Posterior vena cava (tissue), 2 donors: ENCODE measurements at regions of chr12 and their contacts with region 1.

Region 1: GRCh38 chr12:93322784-93323183 is 54.9 kb upstream of the NUDT4 start:
- DNase-seq: no peak

Region 2: GRCh38 chr12:93279565-93280412 is 43.0 kb before region 1 on chr12:
- intact Hi-C with region 1: loop called in 1 of 2 experiments (anchors 1 kb)
- DNase-seq: no peak